ENCODE measurements at regions of chr1 and their contacts with region 1.

Region 1: DNA sequence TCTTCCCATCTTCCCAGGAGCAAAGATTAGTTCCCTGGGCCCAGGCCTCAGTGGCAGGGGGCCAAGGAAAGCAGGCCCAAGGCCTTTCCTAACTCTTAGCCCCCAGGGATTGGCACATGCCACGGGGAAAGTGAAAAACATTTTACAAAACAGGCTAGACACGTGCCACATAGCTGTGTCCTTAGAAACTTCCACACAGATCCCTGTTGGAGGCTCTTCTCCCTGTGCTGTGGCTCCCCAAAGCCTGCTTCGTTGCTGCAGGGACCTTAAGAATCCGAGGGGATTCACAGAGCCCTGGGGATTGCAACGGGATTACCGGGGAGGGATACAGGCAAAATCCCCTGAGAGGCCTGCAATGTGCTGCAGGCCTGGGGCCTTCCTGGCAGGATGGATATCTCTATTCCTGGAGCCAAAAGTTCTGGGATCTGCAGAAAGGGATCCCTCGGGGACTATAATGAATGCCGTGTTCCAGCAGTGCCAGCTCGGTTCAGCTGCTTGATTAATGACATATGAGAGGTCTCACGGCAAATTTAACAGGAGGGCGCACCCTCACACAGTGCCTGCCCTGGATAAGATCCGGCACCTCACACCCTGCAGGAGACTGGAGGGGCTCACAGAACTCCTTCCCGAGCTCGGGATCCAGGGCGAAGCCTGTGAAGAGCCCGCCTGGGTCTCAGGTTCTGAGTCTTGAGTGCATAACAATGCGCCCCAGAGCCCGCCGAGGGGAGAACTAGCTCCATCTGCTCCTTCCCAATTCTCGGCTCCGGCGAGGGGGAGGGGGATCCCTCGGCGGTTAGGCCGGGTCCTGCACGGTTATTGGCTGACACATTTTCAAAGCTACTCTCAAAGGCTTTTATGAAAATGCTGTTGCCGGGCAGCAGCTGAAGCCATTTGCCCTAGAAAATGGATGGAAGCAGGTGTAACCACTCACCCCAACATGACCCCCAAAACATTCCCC is 15.3 kb upstream of the RGS8 start:
- DNase-seq: peak; percentile 50 to 86
- H3K4me3 ChIP-seq: peak overlapping the region; percentile 16 to 53 (median 27); a peak in 7 of 8 replicates
- H3K27ac ChIP-seq: peak overlapping the region; percentile 59
- H3K4me1 ChIP-seq: peaks cover 10 to 32% (median 16%) of the 10 kb centered on the region in 4 experiments
- H3K27me3 ChIP-seq: no peaks in the 10 kb centered on the region
- CTCF ChIP-seq: no peak
- EP300 ChIP-seq: no peak; a peak in 1 of 3 replicates
- POLR2A ChIP-seq: peak in 1 of 2 experiments; percentile 49; a peak in 1 of 3 replicates
- RAD21 ChIP-seq: peak in 1 of 2 experiments; percentile 38; a peak in 2 of 4 replicates

Region 2: GRCh38 chr1:182662121-182662890 is 37.4 kb before region 1 on chr1:
- CTCF ChIA-PET with region 1: interaction called, 13 read pairs
- POLR2A ChIA-PET with region 1: interaction called, 12 read pairs
- DNase-seq: no peak
- H3K4me3 ChIP-seq: peak overlapping the region in 1 of 4 experiments; percentile 35; a peak in 2 of 8 replicates
- H3K27ac ChIP-seq: no peak overlapping the region
- H3K4me1 ChIP-seq: peaks cover 5 to 21% (median 17%) of the 10 kb centered on the region in 4 experiments; a peak in 6 of 7 replicates
- H3K27me3 ChIP-seq: peaks cover 0 to 3% (median 0%) of the 10 kb centered on the region in 4 experiments; a peak in 2 of 7 replicates
- CTCF ChIP-seq: no peak
- EP300 ChIP-seq: no peak
- POLR2A ChIP-seq: no peak
- RAD21 ChIP-seq: no peak; a peak in 1 of 4 replicates

Region 3: GRCh38 chr1:182680901-182681567 is 18.6 kb before region 1 on chr1:
- CTCF ChIA-PET with region 1: interaction called, 10 read pairs
- POLR2A ChIA-PET with region 1: interaction called, 9 read pairs
- DNase-seq: no peak
- H3K4me3 ChIP-seq: no peak overlapping the region
- H3K27ac ChIP-seq: no peak overlapping the region
- H3K4me1 ChIP-seq: peaks cover 0 to 16% (median 4%) of the 10 kb centered on the region in 4 experiments; a peak in 6 of 7 replicates
- H3K27me3 ChIP-seq: peaks cover 0 to 19% (median 8%) of the 10 kb centered on the region in 4 experiments; a peak in 4 of 7 replicates
- CTCF ChIP-seq: no peak
- EP300 ChIP-seq: no peak
- POLR2A ChIP-seq: no peak
- RAD21 ChIP-seq: no peak

Region 4: GRCh38 chr1:182687363-182687762 is 12.3 kb before region 1 on chr1:
- CTCF ChIA-PET with region 1: interaction called, 31 read pairs
- POLR2A ChIA-PET with region 1: interaction called, 9 read pairs
- DNase-seq: no peak
- H3K4me3 ChIP-seq: no peak overlapping the region
- H3K27ac ChIP-seq: no peak overlapping the region
- H3K4me1 ChIP-seq: peaks cover 0 to 12% (median 4%) of the 10 kb centered on the region in 4 experiments; a peak in 6 of 7 replicates
- H3K27me3 ChIP-seq: peaks cover 0 to 19% (median 8%) of the 10 kb centered on the region in 4 experiments; a peak in 4 of 7 replicates
- CTCF ChIP-seq: no peak
- EP300 ChIP-seq: no peak
- POLR2A ChIP-seq: no peak
- RAD21 ChIP-seq: no peak

Region 5: GRCh38 chr1:182720463-182720862 is 20.8 kb after region 1 on chr1:
- CTCF ChIA-PET with region 1: interaction called, 10 read pairs
- POLR2A ChIA-PET with region 1: no interaction called
- DNase-seq: no peak
- H3K4me3 ChIP-seq: peak overlapping the region in 1 of 4 experiments; percentile 4; a peak in 1 of 8 replicates
- H3K27ac ChIP-seq: no peak overlapping the region
- H3K4me1 ChIP-seq: peaks cover 0 to 3% (median 0%) of the 10 kb centered on the region in 4 experiments; a peak in 1 of 7 replicates
- H3K27me3 ChIP-seq: no peaks in the 10 kb centered on the region
- CTCF ChIP-seq: peak in 1 of 3 experiments; percentile 48; a peak in 2 of 4 replicates
- EP300 ChIP-seq: no peak
- POLR2A ChIP-seq: no peak
- RAD21 ChIP-seq: no peak

Region 6: DNA sequence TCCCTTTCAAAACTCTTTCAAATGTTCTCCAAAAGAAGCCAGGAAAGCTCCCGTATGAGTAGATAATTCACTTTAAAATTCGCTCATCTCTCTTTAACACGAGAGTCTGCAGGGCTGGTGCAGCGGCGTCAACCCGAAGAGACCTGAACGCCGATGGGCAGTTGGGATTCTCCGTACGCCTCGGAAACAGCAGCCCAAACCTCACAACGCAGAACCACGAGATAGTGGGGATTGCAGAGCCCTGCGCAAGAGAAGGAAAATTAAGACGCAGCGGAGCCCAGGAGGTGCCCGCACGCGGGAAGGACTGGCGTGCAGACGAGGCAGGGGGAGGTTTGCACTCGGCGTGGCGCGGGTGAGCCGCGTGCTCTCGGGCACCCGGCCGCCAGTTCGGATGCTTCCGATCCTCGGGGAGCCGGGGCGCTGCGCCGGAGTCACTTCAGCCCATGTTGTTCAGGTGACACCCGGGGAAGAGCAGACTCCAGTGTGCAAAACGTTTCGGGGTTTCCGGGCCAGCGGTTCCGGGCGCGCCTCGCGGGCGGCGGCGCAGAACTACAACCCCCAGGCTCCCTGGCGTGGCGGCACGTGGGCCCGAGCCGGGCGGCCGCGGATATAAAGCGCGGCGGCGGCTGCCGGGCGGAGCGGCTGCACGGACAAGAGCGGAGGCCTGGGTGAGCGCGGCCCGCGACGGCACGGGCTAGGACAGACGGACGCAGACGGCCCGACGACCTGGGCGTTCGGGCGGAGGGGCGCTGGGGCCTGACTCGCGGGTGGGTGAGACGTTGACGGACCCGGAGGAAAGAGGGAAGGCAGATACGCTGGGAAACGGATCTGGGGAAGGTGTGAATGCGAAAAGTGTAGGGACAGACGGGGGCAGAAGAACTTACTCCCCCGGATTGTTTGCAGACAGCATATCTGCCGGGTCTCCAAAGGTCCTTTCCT is 89.7 kb after region 1 on chr1 and contains the start of gene NPL:
- CTCF ChIA-PET with region 1: interaction called, 12 read pairs
- POLR2A ChIA-PET with region 1: interaction called, 3 read pairs
- DNase-seq: peak in 1 of 2 experiments; percentile 87
- H3K4me3 ChIP-seq: peak within 1 kb of the TSS; percentile 46 to 65 (median 56)
- H3K27ac ChIP-seq: no peak within 1 kb of the TSS
- H3K4me1 ChIP-seq: no peaks in the 10 kb centered on the region
- H3K27me3 ChIP-seq: peaks cover 15 to 36% (median 24%) of the 10 kb centered on the region in 4 experiments
- CTCF ChIP-seq: no peak
- EP300 ChIP-seq: peak in 1 of 2 experiments; percentile 20; a peak in 1 of 3 replicates
- POLR2A ChIP-seq: peak in 1 of 2 experiments; percentile 69; a peak in 2 of 3 replicates
- RAD21 ChIP-seq: 0 out of 4 replicates have a peak, but pooled peaks of 1 of the 2 experiments have one; percentile 2
- total RNA-seq, gene NPL: 2.3 and 4.4 TPM in 2 replicates

Region 7: GRCh38 chr1:182823220-182823619 is 123.5 kb after region 1 on chr1:
- CTCF ChIA-PET with region 1: no interaction called
- POLR2A ChIA-PET with region 1: no interaction called
- DNase-seq: no peak
- H3K4me3 ChIP-seq: no peak overlapping the region
- H3K27ac ChIP-seq: no peak overlapping the region
- H3K4me1 ChIP-seq: no peaks in the 10 kb centered on the region
- H3K27me3 ChIP-seq: no peaks in the 10 kb centered on the region
- CTCF ChIP-seq: no peak
- EP300 ChIP-seq: no peak
- POLR2A ChIP-seq: no peak
- RAD21 ChIP-seq: no peak